ENCODE measurements at regions of chr19 and their contacts with region 1.

Region 1: DNA sequence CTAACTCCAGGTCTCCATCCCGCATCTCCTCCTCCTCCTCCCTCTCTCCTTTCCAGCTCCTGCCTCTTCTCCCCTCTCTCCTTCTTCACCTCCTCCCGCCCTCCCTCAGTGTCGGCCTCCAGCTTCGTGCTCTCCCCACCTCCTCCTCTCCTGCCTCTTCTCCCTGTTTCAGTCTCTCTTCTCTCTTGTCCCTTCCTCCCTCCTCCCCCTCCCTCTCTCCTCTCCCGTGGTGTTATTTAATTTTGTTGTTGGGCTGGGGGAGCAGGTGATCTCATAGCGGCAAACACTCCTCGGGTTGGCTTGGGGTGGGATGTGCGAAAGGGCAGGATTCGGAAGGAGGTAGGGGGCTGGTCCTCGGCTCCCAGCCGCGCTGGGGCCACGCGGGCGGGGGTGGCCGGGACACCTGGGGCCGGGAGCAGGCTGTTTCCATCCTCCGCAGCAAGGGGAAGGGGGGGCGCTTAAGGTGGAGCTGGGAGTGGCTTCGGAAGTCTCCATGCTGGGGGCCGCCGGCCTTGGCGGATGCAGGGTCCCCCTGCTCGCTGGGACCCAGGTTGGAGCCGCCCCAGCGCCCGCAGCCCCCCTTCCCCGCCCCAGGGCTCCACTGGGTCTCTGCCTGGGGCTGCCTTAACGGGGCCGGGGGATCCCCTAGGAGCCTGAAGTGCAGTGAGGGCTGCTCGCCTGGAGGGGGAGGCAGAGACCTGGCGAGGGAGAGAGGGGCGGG is at the start of gene CA11:
- DNase-seq: peak; percentile 78
- H3K4me3 ChIP-seq: peak within 1 kb of the TSS; percentile 41 to 44
- H3K27ac ChIP-seq: peak within 1 kb of the TSS; percentile 90 to 93
- H3K4me1 ChIP-seq: peaks cover 7% of the 10 kb centered on the region
- H3K27me3 ChIP-seq: no peaks in the 10 kb centered on the region
- CTCF ChIP-seq: peak; percentile 85 to 95 (median 88)
- POLR2A ChIP-seq: peak; percentile 49
- total RNA-seq, gene CA11: 7.0 to 11.2 TPM

Region 2: DNA sequence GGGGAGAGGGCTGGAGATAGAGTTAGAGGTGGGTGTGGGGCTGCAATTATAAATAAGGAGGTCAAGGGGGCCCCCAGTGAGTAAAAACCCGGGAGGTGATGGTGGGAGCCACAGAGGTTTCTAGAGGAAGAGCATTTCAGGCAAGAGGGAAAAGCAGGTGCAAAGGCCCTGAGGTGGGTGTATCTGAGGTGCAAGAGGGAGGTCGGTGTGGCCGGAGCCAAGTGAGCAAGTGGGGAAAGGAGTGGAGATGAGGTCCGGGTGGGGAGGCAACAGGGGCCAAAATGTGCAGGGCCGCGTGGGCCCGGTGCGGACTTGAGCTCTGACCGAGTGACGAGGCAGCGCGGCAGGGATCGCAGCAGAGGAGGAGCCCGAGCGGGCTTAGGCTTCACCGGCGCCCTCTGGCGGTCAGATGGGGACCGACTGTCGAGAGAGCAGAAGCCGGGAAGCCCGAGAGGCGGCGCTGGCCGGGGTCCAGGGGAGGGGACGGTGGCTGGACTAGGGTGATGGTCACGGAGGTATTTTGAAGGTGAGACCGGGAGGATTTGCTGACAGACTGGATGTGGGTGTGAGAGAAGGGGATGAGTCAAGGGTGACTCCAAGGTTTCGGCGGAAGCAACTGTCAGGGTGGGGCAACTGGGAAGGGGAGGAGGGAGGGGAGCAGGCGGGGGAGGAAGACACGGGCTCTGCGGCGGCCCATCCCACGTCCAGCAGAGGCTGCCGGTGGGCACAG is 57.3 kb before region 1 on chr19:
- intact Hi-C with region 1: no loop called
- DNase-seq: peak; percentile 91
- H3K4me3 ChIP-seq: peak overlapping the region in 1 of 2 donors; percentile 19
- H3K27ac ChIP-seq: no peak overlapping the region
- H3K4me1 ChIP-seq: peaks cover 3% of the 10 kb centered on the region
- H3K27me3 ChIP-seq: no peaks in the 10 kb centered on the region
- CTCF ChIP-seq: peak; percentile 86 to 97 (median 90)
- POLR2A ChIP-seq: peak; percentile 28

Region 3: GRCh38 chr19:48713864-48714758 is 68.0 kb after region 1 on chr19:
- intact Hi-C with region 1: loop called (anchors 5 kb)
- DNase-seq: peak; percentile 99
- H3K4me3 ChIP-seq: peak overlapping the region; percentile 47 to 49
- H3K27ac ChIP-seq: peak overlapping the region; percentile 81 to 88
- H3K4me1 ChIP-seq: peaks cover 8% of the 10 kb centered on the region
- H3K27me3 ChIP-seq: no peaks in the 10 kb centered on the region
- CTCF ChIP-seq: peak in 3 of 4 experiments; percentile 18 to 38 (median 38)
- POLR2A ChIP-seq: peak; percentile 85

Region 4: GRCh38 chr19:48842789-48843162 is 196.6 kb after region 1 on chr19:
- intact Hi-C with region 1: loop called (anchors 5 kb)
- DNase-seq: peak; percentile 40
- H3K4me3 ChIP-seq: no peak overlapping the region
- H3K27ac ChIP-seq: no peak overlapping the region
- H3K4me1 ChIP-seq: no peaks in the 10 kb centered on the region
- H3K27me3 ChIP-seq: no peaks in the 10 kb centered on the region
- CTCF ChIP-seq: peak; percentile 59 to 83 (median 78)
- POLR2A ChIP-seq: no peak

Region 5: GRCh38 chr19:48965040-48965805 is 319.1 kb after region 1 on chr19 and contains the start of gene FTL:
- intact Hi-C with region 1: loop called (anchors 10 kb)
- DNase-seq: peak; percentile 97
- H3K4me3 ChIP-seq: peak within 1 kb of the TSS; percentile 69 to 86
- H3K27ac ChIP-seq: peak within 1 kb of the TSS; percentile 93 to 95
- H3K4me1 ChIP-seq: peaks cover 7% of the 10 kb centered on the region
- H3K27me3 ChIP-seq: no peaks in the 10 kb centered on the region
- CTCF ChIP-seq: peak in 2 of 4 experiments; percentile 19 to 20
- POLR2A ChIP-seq: peak; percentile 100
- total RNA-seq, gene FTL: 1,764 to 2,124 TPM

Measured in prostate gland (tissue), 2 donors.